Left cardiac atrium (tissue), 4 donors: ENCODE measurements at regions of chr5 and their contacts with region 1.

Region 1: GRCh38 chr5:129767906-129768380 is 20.0 kb downstream of the MINAR2 start:
- DNase-seq: peak; percentile 40
- ATAC-seq: peak; percentile 95

Region 2: GRCh38 chr5:128905571-128906110 is 862.3 kb before region 1 on chr5:
- intact Hi-C with region 1: loop called in 1 of 2 experiments (anchors 2 kb)
- DNase-seq: no peak
- ATAC-seq: peak; percentile 77 to 78

Region 3: DNA sequence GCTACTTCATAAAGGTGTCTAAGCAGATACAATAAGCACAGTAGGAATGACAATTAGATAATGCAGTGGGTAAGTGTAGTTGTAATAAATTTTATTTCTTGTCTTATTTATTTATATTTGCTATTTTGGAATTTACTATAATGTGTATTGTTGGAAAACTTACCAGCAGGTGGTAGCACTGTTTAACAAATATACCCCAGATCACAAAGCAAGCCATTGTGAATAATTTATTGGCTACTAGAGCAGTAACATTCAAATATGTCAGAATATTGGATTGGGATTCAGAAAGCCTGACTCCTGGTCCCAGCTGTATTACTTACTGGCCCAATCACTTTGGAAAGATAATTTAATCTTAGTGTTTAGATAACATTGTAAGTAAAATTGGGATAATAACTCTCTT is 595.4 kb before region 1 on chr5:
- intact Hi-C with region 1: loop called (anchors 5 to 10 kb)
- DNase-seq: no peak
- ATAC-seq: peak in 1 of 2 donors; percentile 54

Region 4: GRCh38 chr5:129400322-129400983 is 367.5 kb before region 1 on chr5:
- intact Hi-C with region 1: loop called in 1 of 2 experiments (anchors 2 kb)
- DNase-seq: no peak
- ATAC-seq: no peak

Region 5: DNA sequence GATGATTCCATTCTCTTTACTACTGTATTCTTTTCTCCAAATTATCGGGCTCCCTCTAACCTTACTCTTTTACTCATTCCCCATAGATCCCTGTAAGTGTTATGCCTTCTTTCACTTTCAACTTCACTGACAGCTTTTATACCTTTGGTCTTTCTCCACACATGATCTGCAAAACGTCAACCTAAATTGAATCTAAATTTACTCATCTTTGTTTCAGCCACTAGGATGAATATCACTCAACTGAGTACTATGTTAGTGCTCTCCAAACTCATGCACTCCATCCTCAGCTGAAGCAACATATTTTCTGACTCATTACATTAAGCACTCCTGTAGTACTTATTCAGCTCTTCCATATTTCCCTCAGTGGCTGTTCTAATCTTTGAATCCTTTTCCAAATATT is 174.4 kb before region 1 on chr5:
- intact Hi-C with region 1: no loop called
- DNase-seq: no peak
- ATAC-seq: no peak

Region 6: GRCh38 chr5:129830288-129830687 is 62.3 kb after region 1 on chr5:
- intact Hi-C with region 1: no loop called
- DNase-seq: no peak
- ATAC-seq: no peak

Region 7: GRCh38 chr5:129852747-129853352 is 84.9 kb after region 1 on chr5:
- intact Hi-C with region 1: loop called (anchors 2 to 5 kb)
- DNase-seq: peak; percentile 82
- ATAC-seq: peak; percentile 78 to 88

Region 8: DNA sequence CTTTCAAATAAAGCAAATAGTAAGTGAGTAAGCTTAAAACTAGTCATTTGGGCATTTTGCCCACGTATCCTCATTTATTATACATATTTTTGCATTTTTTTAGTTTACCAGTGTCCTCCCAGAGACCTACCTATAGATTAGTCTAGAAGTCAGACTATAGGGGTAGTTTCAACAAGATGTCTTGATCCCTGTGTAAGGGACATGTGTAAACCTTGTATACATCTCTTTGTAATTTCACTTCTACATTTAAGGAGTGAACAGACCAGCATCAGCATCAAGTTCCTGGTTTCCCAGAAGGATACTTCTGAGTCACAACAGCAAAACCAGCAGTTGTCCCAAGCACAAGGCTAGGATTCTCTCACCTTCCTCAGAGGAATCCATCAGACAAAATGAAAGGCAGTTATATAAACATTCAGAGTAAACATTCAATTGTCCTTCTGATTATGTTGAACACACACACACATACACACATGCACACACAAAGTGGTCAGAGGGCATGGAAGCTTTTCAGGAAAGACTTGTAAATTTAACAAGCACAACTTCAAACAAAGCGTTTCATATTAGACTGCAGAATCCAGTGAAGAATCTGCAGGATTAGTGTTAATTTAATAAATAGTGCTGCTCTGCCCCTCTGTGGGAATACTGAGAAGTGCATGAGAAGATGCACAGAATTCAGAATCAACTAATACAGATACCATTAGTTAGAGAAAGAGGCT is 1341.8 kb after region 1 on chr5:
- intact Hi-C with region 1: loop called in 1 of 2 experiments (anchors 5 kb)
- DNase-seq: no peak
- ATAC-seq: peak; percentile 64 to 76